AG04450 (cell line): ENCODE measurements at regions of chr11 and their contacts with region 1.

Region 1: DNA sequence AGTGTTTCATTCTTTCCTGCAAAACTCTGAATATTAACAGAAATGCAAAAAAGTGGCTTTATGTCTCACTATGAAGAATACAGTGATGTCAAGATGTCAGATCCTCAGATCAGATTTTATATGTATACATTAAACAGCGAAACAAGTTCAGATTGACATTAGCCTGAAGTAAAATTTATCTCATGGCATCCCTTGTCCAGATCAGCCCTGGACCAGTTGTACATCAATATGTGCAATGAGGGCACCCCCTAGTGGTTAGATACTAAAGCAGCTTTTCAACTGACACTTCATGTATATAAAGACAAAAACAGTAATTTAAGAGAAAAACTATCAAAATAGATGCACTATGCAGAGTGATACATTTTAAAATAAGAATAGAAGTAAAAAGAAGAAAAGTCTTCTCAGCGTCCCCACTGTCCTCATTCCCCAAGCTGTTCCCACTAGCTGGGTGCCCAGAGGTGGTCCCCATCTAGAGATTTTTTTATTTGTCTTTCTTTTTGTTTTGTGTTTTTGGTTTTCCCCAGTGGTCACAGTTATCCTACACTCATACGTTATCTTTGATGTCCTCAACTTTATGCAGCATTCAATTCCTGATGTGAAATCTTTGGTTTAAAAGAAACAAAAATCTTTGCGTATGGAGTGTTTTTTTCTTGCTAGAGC is 2193.4 kb upstream of the RAG2 start:
- DNase-seq: peak; percentile 36
- H3K4me3 ChIP-seq: no peak overlapping the region
- H3K27ac ChIP-seq: no peak overlapping the region
- H3K27me3 ChIP-seq: no peaks in the 10 kb centered on the region
- CTCF ChIP-seq: peak; percentile 81

Region 2: GRCh38 chr11:37946155-37946766 is 845.2 kb before region 1 on chr11:
- CTCF ChIA-PET with region 1: interaction called, 68 read pairs
- POLR2A ChIA-PET with region 1: no interaction called
- DNase-seq: peak; percentile 7
- H3K4me3 ChIP-seq: no peak overlapping the region
- H3K27ac ChIP-seq: no peak overlapping the region
- H3K27me3 ChIP-seq: no peaks in the 10 kb centered on the region
- CTCF ChIP-seq: peak; percentile 76

Region 3: GRCh38 chr11:38553148-38553547 is 238.3 kb before region 1 on chr11:
- CTCF ChIA-PET with region 1: no interaction called
- POLR2A ChIA-PET with region 1: no interaction called
- DNase-seq: peak; percentile 7
- H3K4me3 ChIP-seq: no peak overlapping the region
- H3K27ac ChIP-seq: no peak overlapping the region
- H3K27me3 ChIP-seq: no peaks in the 10 kb centered on the region
- CTCF ChIP-seq: no peak

Region 4: DNA sequence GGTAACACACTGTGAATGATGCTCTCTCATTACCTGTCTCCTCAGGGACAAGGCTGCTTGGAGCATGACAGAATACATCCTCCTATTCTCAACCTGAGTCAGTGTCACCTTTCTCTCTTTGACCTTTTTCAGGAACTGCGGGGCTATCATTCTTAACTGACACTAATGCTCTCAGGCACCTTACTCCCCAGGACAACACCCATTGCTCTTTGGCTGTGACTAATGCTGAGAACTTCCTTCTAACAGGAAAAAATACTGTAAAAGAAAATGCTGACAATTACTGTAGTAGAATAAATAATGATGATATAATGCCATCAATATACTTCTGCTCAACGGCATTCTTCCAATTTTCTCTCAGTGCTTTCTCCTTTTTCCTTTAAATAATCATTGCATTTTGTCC is 110.7 kb before region 1 on chr11:
- CTCF ChIA-PET with region 1: no interaction called
- POLR2A ChIA-PET with region 1: no interaction called
- DNase-seq: no peak
- H3K4me3 ChIP-seq: no peak overlapping the region
- H3K27ac ChIP-seq: no peak overlapping the region
- H3K27me3 ChIP-seq: no peaks in the 10 kb centered on the region
- CTCF ChIP-seq: no peak

Region 5: GRCh38 chr11:38700111-38700510 is 91.3 kb before region 1 on chr11:
- CTCF ChIA-PET with region 1: no interaction called
- POLR2A ChIA-PET with region 1: no interaction called
- DNase-seq: no peak
- H3K4me3 ChIP-seq: no peak overlapping the region
- H3K27ac ChIP-seq: no peak overlapping the region
- H3K27me3 ChIP-seq: no peaks in the 10 kb centered on the region
- CTCF ChIP-seq: no peak

Region 6: DNA sequence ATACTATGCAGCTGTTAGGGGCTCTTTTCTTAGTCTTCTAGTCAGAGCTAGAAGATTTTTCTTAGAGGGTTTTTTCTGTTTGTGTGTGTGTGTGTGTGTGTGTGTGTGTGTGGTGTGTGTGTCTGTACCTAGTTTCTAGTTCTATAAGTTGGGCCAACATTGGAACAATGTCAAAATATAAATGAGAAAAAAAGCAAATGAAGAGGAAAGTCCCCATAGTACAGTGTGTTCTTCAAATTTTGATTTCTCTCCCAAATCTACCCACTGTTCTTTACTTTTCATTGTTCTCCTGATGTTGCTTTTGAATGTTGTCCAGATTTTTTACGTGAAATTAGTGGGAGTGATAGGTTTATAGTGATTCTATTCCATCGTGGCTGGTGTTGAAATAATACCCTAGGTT is 40.0 kb before region 1 on chr11:
- CTCF ChIA-PET with region 1: no interaction called
- POLR2A ChIA-PET with region 1: no interaction called
- DNase-seq: no peak
- H3K4me3 ChIP-seq: no peak overlapping the region
- H3K27ac ChIP-seq: no peak overlapping the region
- H3K27me3 ChIP-seq: no peaks in the 10 kb centered on the region
- CTCF ChIP-seq: no peak